ENCODE measurements at regions of chr16 and their contacts with region 1.

Region 1: DNA sequence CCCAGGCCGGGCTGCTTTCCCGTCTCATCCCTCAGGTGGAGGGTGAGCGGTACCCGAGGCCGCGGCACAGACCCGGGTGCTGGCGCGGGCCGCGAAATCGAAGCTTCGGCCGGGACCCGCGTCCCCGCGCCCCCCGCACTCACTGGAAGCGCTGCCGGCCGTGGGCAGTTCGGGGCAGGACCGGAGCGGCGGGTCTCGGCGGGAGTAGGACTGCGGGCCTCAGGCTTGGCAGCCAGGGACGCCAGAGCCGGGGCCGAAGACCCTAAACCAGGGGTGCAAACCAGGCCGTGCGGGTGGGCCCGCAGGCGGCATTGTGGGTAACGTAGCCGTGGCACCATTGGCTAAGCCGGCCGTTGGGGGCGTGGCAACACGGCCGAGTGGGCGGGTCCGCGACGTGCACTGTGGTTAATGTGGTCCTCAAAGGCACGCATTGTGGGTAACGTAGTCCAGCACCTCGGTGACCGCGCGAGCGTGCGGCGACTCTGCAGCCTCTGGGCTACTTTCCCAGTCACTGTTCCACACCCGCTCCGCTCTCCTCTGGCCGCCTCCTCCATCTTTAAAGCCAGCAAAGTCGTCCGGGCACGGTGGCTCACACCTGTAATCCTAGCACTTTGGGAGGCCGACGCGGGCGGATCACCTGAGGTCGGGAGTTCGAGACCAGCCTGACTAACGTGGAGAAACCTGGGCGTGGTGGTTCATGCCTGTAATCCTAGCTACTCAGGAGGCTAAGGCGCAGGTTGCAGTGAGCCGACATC is at the start of gene ZNF500:
- DNase-seq: peak; percentile 97 to 98
- ATAC-seq: peak; percentile 89 to 95
- H3K4me3 ChIP-seq: peak within 1 kb of the TSS; percentile 80 to 99 (median 90)
- H3K27ac ChIP-seq: peak within 1 kb of the TSS; percentile 83 to 95 (median 92)
- H3K4me1 ChIP-seq: peaks cover 25 to 30% of the 10 kb centered on the region in 2 donors
- H3K27me3 ChIP-seq: no peaks in the 10 kb centered on the region
- CTCF ChIP-seq: no peak
- POLR2A ChIP-seq: peak; percentile 69 to 70
- total RNA-seq, gene ZNF500: 6.3 to 7.3 (median 6.9) TPM

Region 2: DNA sequence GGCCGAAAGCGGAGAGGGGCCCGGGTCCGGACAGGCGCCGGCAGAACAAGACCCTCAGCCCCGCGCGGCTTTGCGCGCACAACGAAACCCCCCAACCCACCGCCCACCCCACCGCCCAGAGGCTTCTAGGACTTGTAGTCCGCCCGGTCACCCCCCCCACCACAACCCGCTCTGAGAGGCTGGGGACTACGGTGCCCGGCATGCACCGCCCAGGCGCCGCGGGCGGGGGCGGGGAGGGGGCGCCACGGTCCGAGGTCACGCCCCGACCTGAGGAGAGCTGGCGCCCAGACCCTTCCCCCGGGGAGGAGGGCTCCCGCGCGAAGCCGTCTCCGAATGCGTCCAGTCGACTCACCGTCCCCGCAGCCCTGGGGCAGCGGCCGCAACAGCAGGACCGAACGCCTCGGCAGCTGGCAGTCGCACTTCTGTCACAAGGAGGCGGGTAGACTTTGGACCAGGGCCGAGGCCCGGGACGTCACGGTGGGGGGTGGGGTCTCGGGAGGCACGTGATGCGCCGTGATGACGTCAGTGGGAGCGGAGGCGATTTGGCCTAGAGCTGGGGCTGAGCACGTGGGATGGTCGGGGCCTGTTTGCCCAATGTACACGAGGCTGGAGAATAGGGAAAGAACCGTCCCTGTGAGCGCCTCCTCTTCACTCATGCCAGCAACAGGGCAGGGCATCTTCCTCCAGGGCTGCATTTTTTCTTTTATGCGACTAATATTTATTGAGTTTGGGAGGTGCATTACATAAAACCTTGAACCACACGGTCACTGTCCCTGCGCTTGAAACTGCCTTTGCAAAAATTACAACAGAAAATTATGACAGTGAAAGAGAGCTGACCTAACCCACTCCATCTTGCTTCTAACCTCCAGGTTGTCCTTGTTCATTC is 228.5 kb before region 1 on chr16 and contains the start of gene CDIP1:
- in situ Hi-C with region 1: no loop called
- intact Hi-C with region 1: loop called (anchors 2 kb)
- DNase-seq: peak; percentile 91 to 96
- ATAC-seq: peak; percentile 92 to 93
- H3K4me3 ChIP-seq: peak within 1 kb of the TSS; percentile 67 to 90 (median 71)
- H3K27ac ChIP-seq: peak within 1 kb of the TSS; percentile 85 to 98 (median 93)
- H3K4me1 ChIP-seq: peaks cover 27 to 34% of the 10 kb centered on the region in 2 donors
- H3K27me3 ChIP-seq: no peaks in the 10 kb centered on the region
- CTCF ChIP-seq: peak in 2 of 5 experiments; percentile 7 to 15
- POLR2A ChIP-seq: peak; percentile 86 to 87
- total RNA-seq, gene CDIP1: 23.8 to 34.2 (median 25.4) TPM

Region 3: GRCh38 chr16:4802659-4803287 is 35.7 kb after region 1 on chr16:
- in situ Hi-C with region 1: no loop called
- intact Hi-C with region 1: loop called (anchors 2 kb)
- DNase-seq: peak; percentile 91 to 93
- ATAC-seq: peak; percentile 95
- H3K4me3 ChIP-seq: peak overlapping the region; percentile 64 to 97 (median 84)
- H3K27ac ChIP-seq: peak overlapping the region; percentile 76 to 93 (median 86)
- H3K4me1 ChIP-seq: peaks cover 11 to 17% of the 10 kb centered on the region in 2 donors
- H3K27me3 ChIP-seq: no peaks in the 10 kb centered on the region
- CTCF ChIP-seq: peak in 4 of 5 experiments; percentile 32 to 60 (median 42)
- POLR2A ChIP-seq: peak; percentile 1 to 20

Region 4: DNA sequence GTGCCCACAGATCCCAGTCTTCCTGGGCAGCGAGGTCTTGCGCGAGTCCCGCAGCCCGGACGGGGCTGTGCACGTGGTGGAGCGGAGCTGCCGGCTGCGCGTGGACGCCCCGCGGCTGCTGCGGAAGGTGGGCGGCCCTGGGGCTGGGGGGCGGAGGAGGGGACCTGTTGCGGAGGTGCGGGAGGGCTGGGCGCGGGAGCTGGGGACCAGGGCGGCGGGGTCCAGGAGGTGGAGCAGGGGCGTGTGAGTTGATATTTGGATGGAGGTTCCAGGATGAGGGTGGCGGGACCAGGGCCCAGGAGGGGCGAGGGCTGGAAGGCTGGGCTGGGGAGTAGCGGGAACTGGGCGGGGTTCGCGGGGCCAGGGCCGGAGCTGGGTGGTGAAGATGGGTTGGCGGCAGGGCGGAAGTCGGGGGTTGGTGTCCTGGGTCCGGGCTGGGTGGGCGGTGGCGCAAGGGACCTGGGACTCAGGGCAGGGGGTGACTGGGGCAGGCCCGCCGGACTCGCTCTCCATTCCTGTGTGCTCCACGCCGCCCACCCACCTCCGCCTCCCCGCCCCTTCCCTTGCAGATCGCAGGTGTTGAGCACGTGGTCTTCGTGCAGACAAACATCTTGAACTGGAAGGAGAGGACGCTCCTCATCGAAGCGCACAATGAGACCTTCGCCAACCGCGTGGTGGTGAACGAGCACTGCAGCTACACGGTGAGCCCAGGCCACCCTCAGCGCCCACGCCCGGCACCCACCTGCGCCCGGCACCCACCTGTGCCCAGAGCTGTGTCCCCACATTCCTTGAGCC is 220.7 kb after region 1 on chr16:
- in situ Hi-C with region 1: no loop called
- intact Hi-C with region 1: no loop called
- DNase-seq: no peak
- ATAC-seq: peak; percentile 35 to 43
- H3K4me3 ChIP-seq: peak overlapping the region; percentile 9 to 48 (median 30)
- H3K27ac ChIP-seq: no peak overlapping the region
- H3K4me1 ChIP-seq: no peaks in the 10 kb centered on the region
- H3K27me3 ChIP-seq: peaks cover 0 to 19% (median 6%) of the 10 kb centered on the region in 3 donors
- CTCF ChIP-seq: no peak
- POLR2A ChIP-seq: no peak